Upper lobe of right lung (tissue), 1 donor: ENCODE measurements at regions of chr5 and their contacts with region 1.

Region 1: GRCh38 chr5:115579747-115580173 is 22.5 kb downstream of the TICAM2 start:
- DNase-seq: no peak
- ATAC-seq: no peak
- H3K4me3 ChIP-seq: no peak overlapping the region
- H3K27ac ChIP-seq: no peak overlapping the region
- H3K4me1 ChIP-seq: no peaks in the 10 kb centered on the region
- H3K27me3 ChIP-seq: no peaks in the 10 kb centered on the region
- CTCF ChIP-seq: no peak

Region 2: GRCh38 chr5:115309751-115310370 is 269.9 kb before region 1 on chr5:
- intact Hi-C with region 1: loop called (anchors 5 kb)
- DNase-seq: no peak
- ATAC-seq: peak; percentile 50
- H3K4me3 ChIP-seq: no peak overlapping the region
- H3K27ac ChIP-seq: no peak overlapping the region
- H3K4me1 ChIP-seq: no peaks in the 10 kb centered on the region
- H3K27me3 ChIP-seq: no peaks in the 10 kb centered on the region
- CTCF ChIP-seq: peak; percentile 82